Naive thymus-derived CD4-positive, alpha-beta T cell (primary cell): ENCODE measurements at regions of chr15 and their contacts with region 1.

Region 1: GRCh38 chr15:90071208-90071807 is 31.0 kb downstream of the IDH2 start:
- DNase-seq: peak; percentile 41 to 82 (median 74)
- ATAC-seq: peak; percentile 98
- H3K4me3 ChIP-seq: no peak overlapping the region
- H3K4me3 Mint-ChIP-seq: no peak overlapping the region
- H3K27ac ChIP-seq: no peak overlapping the region
- H3K27ac Mint-ChIP-seq: peak overlapping the region in 5 of 9 donors; percentile 8 to 87 (median 70)
- H3K4me1 ChIP-seq: no peaks in the 10 kb centered on the region
- H3K4me1 Mint-ChIP-seq: peaks cover 0 to 10% (median 7%) of the 10 kb centered on the region in 7 donors
- H3K27me3 ChIP-seq: no peaks in the 10 kb centered on the region
- H3K27me3 Mint-ChIP-seq: no peaks in the 10 kb centered on the region

Region 2: DNA sequence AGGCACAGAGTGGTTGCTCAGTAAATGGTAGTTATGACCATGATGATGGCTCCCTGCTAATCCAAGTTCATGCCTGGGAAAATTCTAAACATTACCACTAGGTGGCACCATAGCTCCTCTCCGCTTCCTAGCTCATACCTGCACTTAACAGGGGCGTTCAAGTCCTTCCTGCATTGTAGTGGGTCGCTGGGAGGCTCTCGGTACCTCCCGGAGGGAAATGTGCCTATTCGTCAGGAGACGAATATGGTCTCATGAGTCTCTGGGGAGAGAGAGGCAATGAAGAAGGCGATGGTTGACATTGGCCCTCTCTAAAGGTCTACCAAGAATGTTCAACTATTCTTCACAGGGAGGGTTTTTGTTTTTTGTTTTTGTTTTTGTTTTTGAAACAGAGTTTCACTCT is 331.2 kb before region 1 on chr15:
- CTCF ChIA-PET with region 1: no interaction called
- POLR2A ChIA-PET with region 1: no interaction called
- intact Hi-C with region 1: loop called (anchors 1 to 5 kb)
- DNase-seq: peak in 7 of 9 donors; percentile 51 to 75 (median 64)
- ATAC-seq: peak; percentile 90
- H3K4me3 ChIP-seq: no peak overlapping the region
- H3K4me3 Mint-ChIP-seq: peak overlapping the region in 1 of 10 donors; percentile 25
- H3K27ac ChIP-seq: no peak overlapping the region
- H3K27ac Mint-ChIP-seq: no peak overlapping the region
- H3K4me1 ChIP-seq: no peaks in the 10 kb centered on the region
- H3K4me1 Mint-ChIP-seq: peaks cover 0 to 4% (median 1%) of the 10 kb centered on the region in 7 donors
- H3K27me3 ChIP-seq: no peaks in the 10 kb centered on the region
- H3K27me3 Mint-ChIP-seq: peaks cover 0 to 24% (median 9%) of the 10 kb centered on the region in 5 donors

Region 3: DNA sequence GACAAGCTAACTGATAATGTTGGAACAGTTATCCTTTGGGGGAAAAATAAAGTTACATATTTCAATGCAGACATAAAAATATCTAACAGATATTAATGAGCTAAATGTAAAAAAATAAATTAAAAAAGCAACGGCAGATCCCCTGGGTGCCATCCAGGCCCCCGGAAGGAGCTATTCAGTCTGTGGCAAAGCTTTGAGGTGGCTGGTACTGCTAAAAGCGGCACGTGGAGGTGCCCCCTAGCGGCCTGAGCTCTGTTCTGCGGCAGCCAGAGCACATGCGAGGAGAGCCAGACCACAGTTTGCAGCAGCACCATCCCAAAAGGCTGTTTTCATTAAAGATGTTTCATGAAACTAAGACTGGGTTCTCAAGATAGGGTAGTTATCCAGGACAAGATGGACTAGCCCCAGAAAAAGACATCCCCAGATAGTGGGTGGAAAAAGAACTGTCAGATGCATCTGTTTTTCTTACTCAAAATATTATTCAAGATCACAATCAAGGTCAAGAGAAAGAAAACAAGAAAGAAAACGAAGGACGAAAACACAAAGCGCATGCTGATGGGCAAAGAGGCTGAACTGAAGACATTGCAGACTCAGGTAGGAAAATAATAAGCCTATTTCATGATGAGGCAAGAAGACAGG is 196.3 kb before region 1 on chr15:
- CTCF ChIA-PET with region 1: interaction called, 5 read pairs
- POLR2A ChIA-PET with region 1: no interaction called
- intact Hi-C with region 1: loop called in 1 of 2 experiments (anchors 1 kb)
- DNase-seq: peak; percentile 58 to 80 (median 74)
- ATAC-seq: peak; percentile 99
- H3K4me3 ChIP-seq: no peak overlapping the region
- H3K4me3 Mint-ChIP-seq: peak overlapping the region in 1 of 10 donors; percentile 21
- H3K27ac ChIP-seq: no peak overlapping the region
- H3K27ac Mint-ChIP-seq: peak overlapping the region in 4 of 9 donors; percentile 34 to 77 (median 48)
- H3K4me1 ChIP-seq: no peaks in the 10 kb centered on the region
- H3K4me1 Mint-ChIP-seq: peaks cover 0 to 7% (median 5%) of the 10 kb centered on the region in 7 donors
- H3K27me3 ChIP-seq: no peaks in the 10 kb centered on the region
- H3K27me3 Mint-ChIP-seq: no peaks in the 10 kb centered on the region

Region 4: GRCh38 chr15:90001683-90002427 is 69.5 kb before region 1 on chr15:
- CTCF ChIA-PET with region 1: interaction called, 3 read pairs
- POLR2A ChIA-PET with region 1: interaction called, 7 read pairs
- intact Hi-C with region 1: loop called (anchors 1 to 2 kb)
- DNase-seq: peak; percentile 41 to 78 (median 65)
- ATAC-seq: peak; percentile 68
- H3K4me3 ChIP-seq: no peak overlapping the region
- H3K4me3 Mint-ChIP-seq: peak overlapping the region; percentile 85 to 98 (median 90)
- H3K27ac ChIP-seq: peak overlapping the region; percentile 61
- H3K27ac Mint-ChIP-seq: peak overlapping the region; percentile 85 to 97 (median 91)
- H3K4me1 ChIP-seq: peaks cover 6 to 8% of the 10 kb centered on the region in 2 donors
- H3K4me1 Mint-ChIP-seq: peaks cover 37 to 57% (median 48%) of the 10 kb centered on the region in 7 donors
- H3K27me3 ChIP-seq: no peaks in the 10 kb centered on the region
- H3K27me3 Mint-ChIP-seq: peaks cover 0 to 6% (median 0%) of the 10 kb centered on the region in 5 donors

Region 5: GRCh38 chr15:90031231-90031791 is 40.0 kb before region 1 on chr15:
- CTCF ChIA-PET with region 1: interaction called, 4 read pairs
- POLR2A ChIA-PET with region 1: no interaction called
- intact Hi-C with region 1: loop called in 1 of 2 experiments (anchors 5 kb)
- DNase-seq: peak in 5 of 9 donors; percentile 11 to 40 (median 16)
- ATAC-seq: peak; percentile 31
- H3K4me3 ChIP-seq: no peak overlapping the region
- H3K4me3 Mint-ChIP-seq: peak overlapping the region; percentile 42 to 71 (median 58)
- H3K27ac ChIP-seq: no peak overlapping the region
- H3K27ac Mint-ChIP-seq: peak overlapping the region; percentile 23 to 81 (median 60)
- H3K4me1 ChIP-seq: peaks cover 29 to 37% of the 10 kb centered on the region in 2 donors
- H3K4me1 Mint-ChIP-seq: peaks cover 32 to 61% (median 52%) of the 10 kb centered on the region in 7 donors
- H3K27me3 ChIP-seq: no peaks in the 10 kb centered on the region
- H3K27me3 Mint-ChIP-seq: no peaks in the 10 kb centered on the region

Region 6: DNA sequence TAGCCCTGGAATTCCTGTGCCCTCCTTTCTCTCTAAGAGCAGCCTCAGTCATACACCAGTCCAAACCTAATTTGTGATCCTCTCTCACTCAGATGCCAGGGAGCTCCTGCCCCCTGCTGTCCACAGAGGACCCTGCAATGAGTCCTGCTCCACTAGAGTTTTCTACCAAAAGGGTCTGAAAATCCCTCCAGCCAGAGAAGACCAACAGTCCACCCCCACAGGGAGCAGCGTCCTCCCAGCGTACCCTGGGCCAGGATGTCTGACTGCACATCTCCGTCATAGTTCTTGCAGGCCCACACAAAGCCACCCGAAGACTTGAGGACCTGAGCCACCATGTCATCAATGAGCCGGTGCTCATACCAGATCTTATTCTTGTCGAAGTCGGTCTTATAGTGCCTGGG is 15.6 kb after region 1 on chr15:
- CTCF ChIA-PET with region 1: interaction called, 14 read pairs
- POLR2A ChIA-PET with region 1: no interaction called
- intact Hi-C with region 1: no loop called
- DNase-seq: peak in 8 of 9 donors; percentile 17 to 57 (median 43)
- ATAC-seq: peak; percentile 83
- H3K4me3 ChIP-seq: no peak overlapping the region
- H3K4me3 Mint-ChIP-seq: no peak overlapping the region
- H3K27ac ChIP-seq: no peak overlapping the region
- H3K27ac Mint-ChIP-seq: peak overlapping the region; percentile 23 to 91 (median 72)
- H3K4me1 ChIP-seq: no peaks in the 10 kb centered on the region
- H3K4me1 Mint-ChIP-seq: peaks cover 0 to 21% (median 10%) of the 10 kb centered on the region in 7 donors
- H3K27me3 ChIP-seq: no peaks in the 10 kb centered on the region
- H3K27me3 Mint-ChIP-seq: no peaks in the 10 kb centered on the region